ENCODE measurements at regions of chr22 and their contacts with region 1.

Region 1: GRCh38 chr22:20238536-20238900 is 29.6 kb downstream of the RTN4R start:
- DNase-seq: peak; percentile 34 to 87
- H3K4me3 ChIP-seq: no peak overlapping the region
- H3K27ac ChIP-seq: no peak overlapping the region
- H3K4me1 ChIP-seq: peaks cover 0 to 16% (median 7%) of the 10 kb centered on the region in 4 experiments; a peak in 5 of 7 replicates
- H3K27me3 ChIP-seq: no peaks in the 10 kb centered on the region
- CTCF ChIP-seq: peak; percentile 92 to 95 (median 94)
- EP300 ChIP-seq: no peak
- POLR2A ChIP-seq: no peak
- RAD21 ChIP-seq: peak; percentile 87 to 91

Region 2: GRCh38 chr22:20174785-20175596 is 63.5 kb before region 1 on chr22:
- CTCF ChIA-PET with region 1: interaction called, 21 read pairs
- POLR2A ChIA-PET with region 1: interaction called, 3 read pairs
- DNase-seq: no peak
- H3K4me3 ChIP-seq: no peak overlapping the region
- H3K27ac ChIP-seq: no peak overlapping the region; the same call in 1 of the 2 replicates
- H3K4me1 ChIP-seq: peaks cover 0 to 8% (median 0%) of the 10 kb centered on the region in 4 experiments; a peak in 2 of 7 replicates
- H3K27me3 ChIP-seq: no peaks in the 10 kb centered on the region
- CTCF ChIP-seq: peak; percentile 22 to 39 (median 32); a peak in 3 of 4 replicates
- EP300 ChIP-seq: no peak
- POLR2A ChIP-seq: no peak
- RAD21 ChIP-seq: peak; percentile 29 to 49; a peak in 3 of 4 replicates

Region 3: DNA sequence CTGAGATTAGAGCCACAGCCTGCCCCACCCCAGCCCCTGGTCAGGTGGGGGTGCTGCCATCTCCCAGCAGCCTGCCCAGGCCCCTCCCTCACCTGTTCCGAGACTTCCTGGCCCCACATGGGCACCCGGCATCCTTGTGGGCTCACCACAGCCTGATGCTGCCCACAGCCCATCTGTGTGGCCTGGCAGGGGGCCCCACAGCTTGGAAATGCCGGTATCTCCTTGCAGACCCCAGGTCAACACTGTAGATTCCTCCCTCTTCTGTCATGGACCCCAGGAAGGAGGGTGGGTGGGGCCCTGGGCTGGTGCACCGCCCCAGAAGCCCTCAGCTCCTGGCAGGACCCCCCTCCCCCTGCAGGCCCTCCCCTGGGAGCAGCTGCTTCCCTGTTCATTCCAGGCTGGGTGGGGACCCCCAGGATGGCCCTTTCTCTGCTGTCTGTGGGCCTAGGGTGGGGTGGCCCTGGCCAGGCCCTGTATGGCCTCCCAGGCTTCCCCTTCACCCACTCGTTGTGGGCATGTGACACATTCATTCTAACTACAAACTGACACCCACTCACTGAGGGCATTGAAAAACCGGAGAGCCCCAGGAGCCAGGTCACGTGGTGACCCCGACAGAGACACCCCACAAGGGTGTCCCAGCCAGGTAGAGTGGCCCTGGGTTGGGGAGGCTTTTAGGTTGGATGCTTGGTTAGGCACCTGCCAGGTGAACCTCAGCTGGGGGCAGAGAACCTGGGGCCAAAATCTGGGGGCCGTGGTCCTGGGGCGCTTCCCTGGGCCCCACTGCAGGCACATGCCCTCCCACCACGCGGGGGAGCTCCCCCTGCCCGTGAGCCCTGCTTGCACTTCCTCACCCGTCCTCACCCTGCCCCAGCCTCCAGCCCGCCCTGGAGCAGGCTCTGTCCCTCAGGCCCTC is 43.6 kb before region 1 on chr22:
- CTCF ChIA-PET with region 1: interaction called, 43 read pairs
- POLR2A ChIA-PET with region 1: no interaction called
- DNase-seq: no peak
- H3K4me3 ChIP-seq: no peak overlapping the region
- H3K27ac ChIP-seq: no peak overlapping the region
- H3K4me1 ChIP-seq: no peaks in the 10 kb centered on the region
- H3K27me3 ChIP-seq: no peaks in the 10 kb centered on the region
- CTCF ChIP-seq: peak; percentile 1 to 15 (median 11); a peak in 3 of 4 replicates
- EP300 ChIP-seq: no peak
- POLR2A ChIP-seq: no peak
- RAD21 ChIP-seq: no peak

Region 4: GRCh38 chr22:20211997-20212753 is 26.3 kb before region 1 on chr22:
- CTCF ChIA-PET with region 1: interaction called, 36 read pairs
- POLR2A ChIA-PET with region 1: no interaction called
- DNase-seq: no peak
- H3K4me3 ChIP-seq: no peak overlapping the region
- H3K27ac ChIP-seq: no peak overlapping the region
- H3K4me1 ChIP-seq: no peaks in the 10 kb centered on the region; a peak in 1 of 7 replicates
- H3K27me3 ChIP-seq: no peaks in the 10 kb centered on the region
- CTCF ChIP-seq: no peak
- EP300 ChIP-seq: no peak
- POLR2A ChIP-seq: no peak
- RAD21 ChIP-seq: no peak

Region 5: GRCh38 chr22:20258584-20259326 is 20.2 kb after region 1 on chr22:
- CTCF ChIA-PET with region 1: interaction called, 31 read pairs
- POLR2A ChIA-PET with region 1: interaction called, 3 read pairs
- DNase-seq: no peak
- H3K4me3 ChIP-seq: no peak overlapping the region
- H3K27ac ChIP-seq: no peak overlapping the region
- H3K4me1 ChIP-seq: no peaks in the 10 kb centered on the region
- H3K27me3 ChIP-seq: no peaks in the 10 kb centered on the region
- CTCF ChIP-seq: peak; percentile 43 to 69 (median 52)
- EP300 ChIP-seq: no peak
- POLR2A ChIP-seq: no peak
- RAD21 ChIP-seq: peak in 1 of 2 experiments; percentile 40; a peak in 2 of 4 replicates

Region 6: DNA sequence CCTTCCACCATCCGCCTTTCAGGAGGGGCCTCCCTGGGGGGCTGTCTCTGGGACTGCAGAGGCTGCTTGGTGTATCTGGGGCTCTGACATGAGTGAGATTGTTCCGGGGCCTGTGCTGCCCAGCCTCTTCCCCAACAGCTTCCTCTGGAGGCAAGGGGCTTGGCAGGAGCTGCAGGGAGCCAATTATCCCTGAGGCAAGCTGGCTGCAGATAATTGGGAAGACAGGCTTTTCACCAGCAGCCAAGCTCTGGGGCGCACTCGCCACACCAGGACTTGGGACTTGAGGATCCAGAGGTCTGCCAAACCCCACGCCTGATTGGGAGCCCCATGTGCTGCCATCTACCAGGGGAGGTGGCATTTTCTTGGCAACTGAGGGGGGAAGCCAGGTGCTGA is 45.2 kb after region 1 on chr22:
- CTCF ChIA-PET with region 1: interaction called, 29 read pairs
- POLR2A ChIA-PET with region 1: no interaction called
- DNase-seq: no peak
- H3K4me3 ChIP-seq: no peak overlapping the region
- H3K27ac ChIP-seq: no peak overlapping the region
- H3K4me1 ChIP-seq: no peaks in the 10 kb centered on the region
- H3K27me3 ChIP-seq: no peaks in the 10 kb centered on the region
- CTCF ChIP-seq: no peak
- EP300 ChIP-seq: no peak
- POLR2A ChIP-seq: no peak
- RAD21 ChIP-seq: no peak

Measured in H1 (cell line).